HEK293 (cell line): ENCODE measurements at regions of chr17 and their contacts with region 1.

Region 1: DNA sequence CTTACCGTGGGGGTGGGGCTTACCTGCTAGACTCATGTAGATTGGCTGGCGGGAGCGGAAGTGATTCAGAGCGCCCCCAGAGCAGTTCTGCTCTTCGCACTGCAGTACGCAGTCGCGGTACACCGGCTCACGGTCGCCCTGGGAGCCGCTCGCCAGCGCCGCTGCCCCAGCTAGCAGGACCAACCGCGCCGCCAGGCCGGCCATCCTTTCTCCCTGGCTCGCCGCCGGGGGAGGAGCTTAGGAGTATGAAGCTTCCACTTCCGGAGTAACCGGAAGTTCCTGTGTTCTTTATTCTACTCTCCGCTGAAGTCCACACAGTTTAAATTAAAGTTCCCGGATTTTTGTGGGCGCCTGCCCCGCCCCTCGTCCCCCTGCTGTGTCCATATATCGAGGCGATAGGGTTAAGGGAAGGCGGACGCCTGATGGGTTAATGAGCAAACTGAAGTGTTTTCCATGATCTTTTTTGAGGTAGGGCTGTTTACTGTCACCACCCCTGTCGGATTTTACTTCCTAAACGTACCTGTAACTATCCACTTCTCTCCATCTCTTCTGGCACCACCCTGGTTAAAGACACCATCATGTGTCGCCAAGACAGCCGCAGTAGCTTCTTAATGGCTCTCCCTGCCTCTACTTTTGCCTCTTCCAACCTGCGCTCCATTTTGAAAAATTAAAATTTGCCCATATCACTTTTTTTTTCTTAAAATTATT is at the start of gene PGAP3:
- H3K4me3 ChIP-seq: peak within 1 kb of the TSS; percentile 81
- H3K27ac ChIP-seq: peak within 1 kb of the TSS; percentile 97
- H3K4me1 ChIP-seq: 0 out of 2 replicates have a peak, but pooled peaks cover 7% of the 10 kb centered on the region
- CTCF ChIP-seq: peak; percentile 57

Region 2: GRCh38 chr17:39699818-39700147 is 11.8 kb after region 1 on chr17 and contains the start of gene ERBB2:
- CTCF ChIA-PET with region 1: interaction called, 11 read pairs
- POLR2A ChIA-PET with region 1: interaction called, 42 read pairs
- H3K4me3 ChIP-seq: peak within 1 kb of the TSS; percentile 81
- H3K27ac ChIP-seq: peak within 1 kb of the TSS; percentile 68; the same call in 1 of the 2 replicates
- H3K4me1 ChIP-seq: peaks cover 13% of the 10 kb centered on the region; the same call in 1 of the 2 replicates
- CTCF ChIP-seq: no peak